H1 (cell line): ENCODE measurements at regions of chr11 and their contacts with region 1.

Region 1: GRCh38 chr11:70810133-70810532 is 411.8 kb downstream of the CTTN start:
- DNase-seq: no peak
- H3K4me3 ChIP-seq: no peak overlapping the region
- H3K27ac ChIP-seq: no peak overlapping the region; the same call in 1 of the 2 replicates
- H3K4me1 ChIP-seq: peaks cover 0 to 1% (median 0%) of the 10 kb centered on the region in 4 experiments; a peak in 2 of 7 replicates
- H3K27me3 ChIP-seq: no peaks in the 10 kb centered on the region
- CTCF ChIP-seq: no peak
- EP300 ChIP-seq: no peak
- POLR2A ChIP-seq: no peak
- RAD21 ChIP-seq: no peak

Region 2: GRCh38 chr11:70762810-70763209 is 47.3 kb before region 1 on chr11:
- CTCF ChIA-PET with region 1: no interaction called
- POLR2A ChIA-PET with region 1: no interaction called
- DNase-seq: no peak
- H3K4me3 ChIP-seq: no peak overlapping the region
- H3K27ac ChIP-seq: no peak overlapping the region
- H3K4me1 ChIP-seq: peaks cover 0 to 3% (median 1%) of the 10 kb centered on the region in 4 experiments; a peak in 2 of 7 replicates
- H3K27me3 ChIP-seq: no peaks in the 10 kb centered on the region
- CTCF ChIP-seq: no peak
- EP300 ChIP-seq: no peak
- POLR2A ChIP-seq: no peak
- RAD21 ChIP-seq: no peak

Region 3: DNA sequence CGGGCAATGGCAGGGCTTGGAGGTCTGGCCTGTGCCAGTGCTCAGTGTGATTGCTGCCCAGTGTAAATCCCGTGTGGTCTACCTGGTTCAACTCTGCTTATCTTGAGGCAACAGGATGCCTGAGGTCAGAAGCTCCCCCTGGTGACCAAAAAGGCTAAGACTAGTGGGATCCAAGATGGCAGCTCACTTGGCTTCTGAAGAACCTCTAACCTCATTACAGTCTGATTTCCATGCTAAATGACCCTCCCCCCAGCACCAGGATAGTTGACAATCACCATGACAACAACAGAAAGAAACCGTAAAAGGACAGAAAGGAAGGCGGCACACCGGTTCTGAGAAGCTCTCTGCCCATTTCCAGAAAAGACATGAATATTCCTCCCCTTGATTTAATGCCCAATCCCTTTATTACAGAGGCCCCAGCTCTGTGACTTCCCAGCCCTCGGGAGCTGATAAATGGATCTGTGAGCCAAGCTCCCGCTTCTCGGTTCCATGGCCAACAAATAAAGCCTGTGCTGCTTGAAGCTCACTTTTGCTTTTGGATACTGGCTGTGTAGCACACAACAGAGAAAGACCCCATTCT is 13.4 kb before region 1 on chr11:
- CTCF ChIA-PET with region 1: interaction called, 14 read pairs
- POLR2A ChIA-PET with region 1: interaction called, 3 read pairs
- DNase-seq: peak in 1 of 2 experiments; percentile 53
- H3K4me3 ChIP-seq: no peak overlapping the region
- H3K27ac ChIP-seq: no peak overlapping the region
- H3K4me1 ChIP-seq: peaks cover 0 to 4% (median 0%) of the 10 kb centered on the region in 4 experiments; a peak in 1 of 7 replicates
- H3K27me3 ChIP-seq: no peaks in the 10 kb centered on the region
- CTCF ChIP-seq: peak; percentile 27 to 72 (median 53)
- EP300 ChIP-seq: no peak
- POLR2A ChIP-seq: no peak
- RAD21 ChIP-seq: peak; percentile 34 to 52